Posterior cingulate gyrus (tissue), 11 donors: ENCODE measurements at regions of chr7 and their contacts with region 1.

Region 1: DNA sequence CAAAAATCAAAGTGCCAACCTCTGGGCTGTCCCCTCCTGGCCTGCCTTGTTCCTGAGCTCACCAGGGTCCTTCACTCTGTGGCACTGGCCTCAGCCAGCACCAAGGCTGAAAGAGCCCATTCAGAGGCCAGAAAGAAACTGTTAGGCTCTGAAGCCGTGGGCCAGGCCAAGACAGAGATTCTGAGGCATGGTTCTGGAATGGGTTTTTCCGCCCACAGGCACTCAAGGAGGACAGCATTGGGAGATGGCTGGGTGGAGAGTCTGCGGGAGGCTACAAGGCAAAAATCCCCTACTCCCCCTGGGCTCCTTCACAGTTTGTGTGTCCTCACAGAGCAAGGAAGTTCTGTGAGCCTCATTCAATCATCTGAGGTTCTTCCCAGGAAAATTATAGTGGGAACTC is 31.7 kb downstream of the GRIFIN start:
- DNase-seq: peak in 3 of 10 donors; percentile 23 to 28 (median 27)

Region 2: GRCh38 chr7:2417981-2418481 is 26.4 kb before region 1 on chr7:
- intact Hi-C with region 1: loop called (anchors 1 kb)
- DNase-seq: peak in 1 of 10 donors; percentile 67

Region 3: GRCh38 chr7:2680792-2681490 is 236.5 kb after region 1 on chr7:
- intact Hi-C with region 1: loop called (anchors 10 kb)
- DNase-seq: peak; percentile 71 to 97 (median 89)